Calu3 (cell line): ENCODE measurements at regions of chr5 and their contacts with region 1.

Region 1: GRCh38 chr5:173615884-173616576 is 420 bp downstream of the BOD1 start:
- DNase-seq: peak; percentile 78
- H3K4me3 Mint-ChIP-seq: peak overlapping the region; percentile 97
- H3K27ac Mint-ChIP-seq: peak overlapping the region; percentile 96
- H3K4me1 Mint-ChIP-seq: peaks cover 48% of the 10 kb centered on the region
- H3K27me3 Mint-ChIP-seq: no peaks in the 10 kb centered on the region
- CTCF ChIP-seq: peak; percentile 64

Region 2: DNA sequence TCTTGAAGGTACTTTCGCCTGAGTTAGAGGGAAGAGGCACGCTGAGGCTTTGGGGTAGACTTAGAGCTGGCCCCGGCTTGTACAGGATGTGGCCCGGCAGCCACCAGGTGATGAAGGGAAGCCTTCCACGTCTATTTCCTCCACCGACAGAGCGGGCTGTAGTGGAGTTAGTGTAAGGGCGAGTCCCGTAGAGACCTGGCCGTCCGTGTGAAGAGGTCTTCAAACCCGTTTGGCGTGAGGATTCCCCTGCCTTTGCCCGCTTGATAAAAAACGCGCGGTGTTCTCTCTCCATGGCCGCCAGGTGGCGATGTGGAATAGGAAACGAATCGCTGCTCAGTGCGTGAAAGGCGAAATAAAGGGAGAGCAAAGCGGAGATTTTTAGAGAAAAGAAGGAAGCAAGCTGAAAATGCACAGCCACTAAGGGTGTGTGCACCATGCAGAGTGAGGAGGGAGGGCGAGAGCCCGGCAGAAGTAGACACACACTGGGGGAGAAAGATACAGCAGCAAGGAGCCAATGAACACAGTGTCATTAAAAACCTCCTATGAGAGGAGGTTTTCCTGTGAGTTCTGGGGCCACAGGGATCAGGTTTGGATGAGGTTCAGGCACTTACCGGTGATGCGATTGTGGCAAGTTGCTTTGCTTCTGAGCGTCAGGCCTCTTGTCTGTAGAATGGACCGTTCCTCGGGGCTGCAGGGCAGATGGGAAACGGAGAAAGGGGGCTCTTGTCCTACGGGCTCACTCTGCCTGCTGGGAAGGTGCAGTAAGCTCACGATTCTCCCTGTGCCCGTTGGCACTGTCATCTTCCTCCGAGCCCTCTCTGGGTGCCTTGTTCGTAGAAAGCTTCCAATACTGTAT is 322.0 kb before region 1 on chr5:
- CTCF ChIA-PET with region 1: interaction called, 17 read pairs
- intact Hi-C with region 1: loop called (anchors 1 kb)
- DNase-seq: peak; percentile 87
- H3K4me3 Mint-ChIP-seq: peak overlapping the region; percentile 20
- H3K27ac Mint-ChIP-seq: peak overlapping the region; percentile 40
- H3K4me1 Mint-ChIP-seq: peaks cover 11% of the 10 kb centered on the region
- H3K27me3 Mint-ChIP-seq: peaks cover 52% of the 10 kb centered on the region
- CTCF ChIP-seq: peak; percentile 93

Region 3: GRCh38 chr5:173567574-173567973 is 48.5 kb before region 1 on chr5:
- CTCF ChIA-PET with region 1: no interaction called
- intact Hi-C with region 1: no loop called
- DNase-seq: no peak
- H3K4me3 Mint-ChIP-seq: no peak overlapping the region
- H3K27ac Mint-ChIP-seq: no peak overlapping the region
- H3K4me1 Mint-ChIP-seq: peaks cover 5% of the 10 kb centered on the region
- H3K27me3 Mint-ChIP-seq: peaks cover 11% of the 10 kb centered on the region
- CTCF ChIP-seq: no peak

Region 4: DNA sequence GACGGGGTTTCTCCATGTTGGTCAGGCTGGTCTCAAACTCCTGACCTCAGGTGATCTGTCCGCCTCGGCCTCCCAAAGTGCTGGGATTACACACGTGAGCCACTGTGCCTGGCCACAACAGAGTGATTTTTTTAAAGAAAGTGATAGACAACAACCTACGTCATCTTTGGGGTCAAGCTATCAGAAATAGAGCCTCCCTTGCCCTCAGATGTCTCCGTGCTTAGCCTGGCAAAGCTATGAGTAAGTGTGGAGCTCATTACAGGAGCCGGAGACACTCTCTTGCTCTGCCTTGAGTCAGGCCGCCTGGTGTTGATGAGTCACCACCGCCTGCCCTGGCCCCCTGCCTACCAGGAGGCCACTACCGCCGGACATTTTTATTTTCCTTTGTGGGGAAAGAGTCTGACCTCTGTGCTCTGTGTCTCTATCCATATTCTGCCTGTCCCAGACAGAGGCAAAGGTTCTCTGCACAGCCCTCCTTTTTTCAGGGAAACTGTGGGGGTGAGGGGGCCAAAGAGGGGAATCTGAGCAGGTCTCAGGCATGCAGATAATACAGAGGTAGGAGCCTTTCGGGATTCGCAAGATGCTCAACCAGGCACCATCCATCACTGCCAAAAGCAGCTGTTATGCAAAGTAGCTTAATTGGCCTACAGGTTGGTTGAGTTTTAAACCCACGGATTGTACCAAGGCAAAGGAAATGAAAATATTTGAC is 148.4 kb after region 1 on chr5:
- CTCF ChIA-PET with region 1: no interaction called
- intact Hi-C with region 1: loop called (anchors 2 kb)
- DNase-seq: peak; percentile 92
- H3K4me3 Mint-ChIP-seq: peak overlapping the region; percentile 27
- H3K27ac Mint-ChIP-seq: peak overlapping the region; percentile 96
- H3K4me1 Mint-ChIP-seq: peaks cover 51% of the 10 kb centered on the region
- H3K27me3 Mint-ChIP-seq: no peaks in the 10 kb centered on the region
- CTCF ChIP-seq: no peak

Region 5: DNA sequence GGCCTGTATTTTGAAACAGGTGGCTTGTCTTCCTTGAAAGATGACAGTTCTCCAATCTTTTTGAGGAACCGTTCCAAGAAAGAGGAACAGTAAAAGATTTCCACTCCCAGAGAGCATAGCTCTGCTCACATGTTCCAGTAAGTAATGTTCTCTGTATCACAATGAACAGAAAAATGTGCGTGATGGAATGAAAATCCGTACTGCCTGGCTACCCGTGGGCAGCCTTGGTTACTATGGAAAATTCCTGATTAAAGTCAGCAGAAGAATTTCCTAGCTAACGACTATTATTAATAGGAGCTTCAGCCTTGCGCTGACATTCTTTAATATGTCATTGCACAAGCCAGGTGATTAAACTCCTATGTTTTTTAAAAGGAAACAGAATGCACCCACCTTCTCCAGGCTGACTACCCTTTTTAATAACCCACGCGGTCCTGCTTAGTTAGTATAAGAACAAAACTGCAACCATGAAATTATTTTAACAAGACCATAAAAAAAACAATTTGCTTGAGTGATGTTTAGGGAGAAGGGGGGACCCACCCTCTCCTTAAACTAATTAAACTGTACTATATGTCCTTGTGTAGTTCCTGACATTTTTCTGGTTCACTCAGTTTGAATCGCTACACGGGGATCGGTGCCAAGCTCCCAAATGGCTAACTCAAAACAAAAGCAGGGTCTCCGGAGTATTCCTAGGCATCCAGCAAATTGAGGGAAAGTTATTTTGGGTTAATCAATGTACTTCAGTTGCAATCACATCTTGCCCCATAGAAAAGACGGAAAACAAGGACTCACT is 217.4 kb after region 1 on chr5:
- CTCF ChIA-PET with region 1: no interaction called
- intact Hi-C with region 1: no loop called
- DNase-seq: no peak
- H3K4me3 Mint-ChIP-seq: no peak overlapping the region
- H3K27ac Mint-ChIP-seq: no peak overlapping the region
- H3K4me1 Mint-ChIP-seq: no peaks in the 10 kb centered on the region
- H3K27me3 Mint-ChIP-seq: no peaks in the 10 kb centered on the region
- CTCF ChIP-seq: no peak

Region 6: DNA sequence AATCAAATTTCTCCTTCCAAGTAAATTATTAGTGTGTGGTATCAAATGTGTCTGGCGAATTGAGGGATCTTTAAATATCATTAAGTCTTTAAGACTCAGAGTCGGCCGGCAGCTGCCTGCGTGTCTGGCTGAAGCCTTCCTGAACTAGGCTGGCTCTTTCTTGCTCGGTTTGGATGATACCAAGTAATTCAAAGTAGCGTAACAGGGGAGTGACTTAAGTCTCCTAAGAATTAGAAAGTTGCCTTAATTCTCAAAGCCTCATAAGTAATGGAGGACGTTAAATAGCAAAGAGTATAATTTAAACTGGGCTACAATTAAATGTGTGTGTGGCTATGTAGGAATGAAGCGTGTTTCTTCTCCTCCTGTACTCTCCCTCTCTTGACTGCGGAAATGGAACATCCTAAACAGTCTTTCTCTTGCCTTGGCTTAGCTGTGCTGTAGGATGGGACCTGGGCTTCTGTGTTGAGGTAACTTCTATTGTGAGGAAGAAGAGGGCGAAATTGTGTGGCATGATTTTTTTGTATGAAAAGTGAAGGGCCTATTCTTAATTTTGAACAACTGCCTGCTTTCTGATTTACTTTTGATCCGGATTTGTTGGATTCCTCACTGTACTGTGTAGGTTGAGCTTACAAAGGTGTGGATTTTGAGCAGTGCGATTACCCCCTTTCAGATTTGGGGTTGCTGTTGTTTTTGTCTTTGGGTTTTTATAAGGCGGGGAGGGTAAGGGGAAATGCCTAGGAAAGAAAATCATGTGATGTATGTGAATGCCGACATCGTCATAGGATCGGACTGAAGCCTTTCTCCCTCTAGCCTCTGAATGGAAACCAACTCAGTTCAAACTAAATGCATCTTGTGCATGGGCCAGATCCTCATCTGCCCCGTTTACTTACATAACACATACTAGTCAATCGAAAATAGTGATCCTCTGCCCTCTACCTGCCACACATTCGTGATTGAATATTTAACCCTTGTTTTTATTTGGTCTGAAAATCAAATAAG is 302.1 kb after region 1 on chr5:
- CTCF ChIA-PET with region 1: interaction called, 3 read pairs
- intact Hi-C with region 1: loop called (anchors 2 kb)
- DNase-seq: peak; percentile 58
- H3K4me3 Mint-ChIP-seq: no peak overlapping the region
- H3K27ac Mint-ChIP-seq: no peak overlapping the region
- H3K4me1 Mint-ChIP-seq: peaks cover 9% of the 10 kb centered on the region
- H3K27me3 Mint-ChIP-seq: no peaks in the 10 kb centered on the region
- CTCF ChIP-seq: no peak

Region 7: DNA sequence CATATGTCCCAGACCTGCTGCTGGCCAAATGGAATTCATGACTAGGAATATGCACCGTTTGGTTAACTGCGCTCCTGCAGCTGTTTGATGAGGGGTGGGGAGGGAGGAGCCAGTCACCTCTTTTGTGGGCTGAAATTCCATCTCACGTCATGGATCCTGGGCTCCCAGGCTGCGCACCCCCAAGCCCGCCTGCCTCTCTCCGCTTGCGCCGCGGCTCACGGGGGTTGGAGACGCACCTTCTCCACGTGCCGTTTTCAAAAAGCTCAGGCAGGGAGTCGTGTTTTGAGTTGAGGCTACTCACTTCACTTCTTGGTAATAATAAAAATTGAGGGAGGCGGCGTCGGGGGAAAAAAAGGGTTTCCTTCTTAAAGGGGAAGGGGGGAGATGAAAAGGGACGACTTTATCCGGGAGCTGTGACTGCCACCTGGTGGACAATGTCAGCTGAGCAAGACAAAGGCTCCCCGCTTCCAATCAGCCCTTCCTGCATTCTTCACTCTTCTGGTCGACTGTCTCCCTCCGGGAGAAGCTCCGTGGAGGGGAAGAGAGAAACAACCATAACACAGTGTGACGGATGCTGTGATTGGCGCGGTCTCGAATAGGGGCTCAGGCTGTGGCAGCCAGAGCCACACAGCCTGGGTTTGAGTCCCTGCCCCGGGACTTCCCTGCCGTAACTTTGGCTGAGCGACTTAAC is 357.0 kb after region 1 on chr5:
- CTCF ChIA-PET with region 1: interaction called, 17 read pairs
- intact Hi-C with region 1: loop called (anchors 1 kb)
- DNase-seq: peak; percentile 85
- H3K4me3 Mint-ChIP-seq: peak overlapping the region; percentile 73
- H3K27ac Mint-ChIP-seq: peak overlapping the region; percentile 60
- H3K4me1 Mint-ChIP-seq: peaks cover 22% of the 10 kb centered on the region
- H3K27me3 Mint-ChIP-seq: peaks cover 21% of the 10 kb centered on the region
- CTCF ChIP-seq: peak; percentile 82

Region 8: DNA sequence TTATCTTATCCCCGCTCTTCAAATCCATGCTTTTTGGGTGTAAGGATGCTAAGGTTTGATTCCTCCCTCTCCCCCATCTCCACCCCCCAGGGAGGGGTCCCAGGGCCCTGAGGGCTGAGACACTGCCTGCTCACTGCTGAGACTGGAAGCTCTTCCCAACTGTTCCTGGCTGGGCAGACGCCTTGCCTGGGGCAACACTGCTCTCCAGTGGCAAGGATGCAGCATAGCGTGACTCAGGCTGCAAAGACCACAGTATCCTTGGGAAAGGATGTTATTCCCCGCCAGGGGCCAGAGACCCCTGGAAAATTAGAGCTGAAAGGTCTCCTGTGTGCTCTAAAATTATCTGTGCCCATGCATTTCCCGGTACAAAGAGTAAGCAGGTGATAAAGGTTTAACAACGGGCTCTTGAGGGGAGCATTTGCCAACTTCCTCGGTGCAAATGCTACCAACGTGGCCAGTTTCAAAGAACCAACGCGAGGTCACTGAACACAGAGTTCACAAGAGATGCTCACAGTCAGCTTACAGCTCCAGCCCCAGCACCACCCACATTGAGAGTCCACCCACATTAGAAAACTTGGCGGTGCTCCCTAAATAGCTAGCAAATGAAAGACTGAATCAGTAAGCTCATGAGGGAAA is 701.3 kb after region 1 on chr5:
- CTCF ChIA-PET with region 1: interaction called, 4 read pairs
- intact Hi-C with region 1: loop called (anchors 1 kb)
- DNase-seq: peak; percentile 60
- H3K4me3 Mint-ChIP-seq: no peak overlapping the region
- H3K27ac Mint-ChIP-seq: no peak overlapping the region
- H3K4me1 Mint-ChIP-seq: no peaks in the 10 kb centered on the region
- H3K27me3 Mint-ChIP-seq: peaks cover 100% of the 10 kb centered on the region
- CTCF ChIP-seq: peak; percentile 76